Common myeloid progenitor, CD34-positive (primary cell): ENCODE measurements at regions of chr16 and their contacts with region 1.

Region 1: GRCh38 chr16:85377388-85378144 is 235.6 kb upstream of the GSE1 start:
- DNase-seq: peak; percentile 62 to 95 (median 89)
- H3K4me3 ChIP-seq: peak overlapping the region in 1 of 7 experiments; percentile 23
- H3K27ac ChIP-seq: peak overlapping the region in 1 of 2 experiments; percentile 47
- H3K4me1 ChIP-seq: peaks cover 4 to 99% (median 84%) of the 10 kb centered on the region in 4 experiments
- H3K27me3 ChIP-seq: no peaks in the 10 kb centered on the region

Region 2: DNA sequence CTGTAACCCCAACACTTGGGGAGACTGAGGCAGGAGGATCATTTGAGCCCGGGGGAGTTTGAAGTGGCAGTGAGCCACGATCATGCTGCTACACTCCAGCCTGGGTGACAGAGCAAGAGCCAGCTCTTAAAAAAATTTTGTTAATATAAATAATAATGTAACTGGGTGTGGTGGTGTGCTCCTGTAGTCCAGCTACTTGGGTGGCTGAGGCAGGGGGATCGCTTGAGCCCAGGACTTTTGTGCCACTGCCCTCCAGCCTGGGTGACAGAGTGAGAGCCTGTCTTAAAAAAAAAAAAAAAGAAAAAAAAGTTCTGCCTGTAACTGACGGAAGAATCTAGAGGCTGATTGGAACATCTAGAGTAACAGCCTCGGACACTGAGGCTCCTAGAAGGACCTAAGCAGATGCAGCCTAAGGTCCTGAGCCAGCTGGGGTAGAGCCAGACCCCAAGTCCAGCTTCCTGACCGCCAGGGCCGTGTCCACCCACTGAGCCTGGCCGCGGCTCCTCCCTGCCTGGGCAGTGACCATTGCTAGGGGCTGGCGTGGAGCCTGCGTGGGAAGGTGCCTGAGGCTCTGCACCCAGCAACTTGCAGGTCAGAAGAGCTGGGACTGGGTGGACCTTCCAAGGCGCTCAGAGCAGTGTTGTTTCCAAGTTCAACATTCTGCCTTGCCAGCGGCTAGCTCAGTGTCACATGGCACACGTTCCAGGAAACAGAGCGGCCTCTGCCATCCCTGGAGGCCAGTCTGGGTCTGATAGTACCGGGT is 55.9 kb before region 1 on chr16:
- CTCF ChIA-PET with region 1: no interaction called
- POLR2A ChIA-PET with region 1: no interaction called
- DNase-seq: no peak
- H3K4me3 ChIP-seq: no peak overlapping the region
- H3K27ac ChIP-seq: no peak overlapping the region
- H3K4me1 ChIP-seq: peaks cover 0 to 37% (median 18%) of the 10 kb centered on the region in 4 experiments
- H3K27me3 ChIP-seq: no peaks in the 10 kb centered on the region

Region 3: GRCh38 chr16:85347213-85347591 is 30.4 kb before region 1 on chr16:
- CTCF ChIA-PET with region 1: interaction called, 10 read pairs
- POLR2A ChIA-PET with region 1: no interaction called
- DNase-seq: peak; percentile 59 to 71 (median 69)
- H3K4me3 ChIP-seq: no peak overlapping the region
- H3K27ac ChIP-seq: no peak overlapping the region
- H3K4me1 ChIP-seq: peaks cover 0 to 9% (median 0%) of the 10 kb centered on the region in 4 experiments
- H3K27me3 ChIP-seq: peaks cover 0 to 3% (median 0%) of the 10 kb centered on the region in 5 experiments